ENCODE measurements at regions of chr11 and their contacts with region 1.

Region 1: GRCh38 chr11:33266393-33267215 is 9.4 kb downstream of the HIPK3 start:
- DNase-seq: peak; percentile 31 to 66
- H3K4me3 ChIP-seq: no peak overlapping the region
- H3K27ac ChIP-seq: peak overlapping the region; percentile 25; the same call in 1 of the 2 replicates
- H3K4me1 ChIP-seq: peaks cover 56% of the 10 kb centered on the region
- H3K27me3 ChIP-seq: no peaks in the 10 kb centered on the region
- CTCF ChIP-seq: no peak

Region 2: GRCh38 chr11:33187998-33188722 is 78.4 kb before region 1 on chr11:
- CTCF ChIA-PET with region 1: interaction called, 11 read pairs
- POLR2A ChIA-PET with region 1: no interaction called
- intact Hi-C with region 1: no loop called
- DNase-seq: peak in 1 of 2 experiments; percentile 28
- H3K4me3 ChIP-seq: no peak overlapping the region
- H3K27ac ChIP-seq: no peak overlapping the region
- H3K4me1 ChIP-seq: no peaks in the 10 kb centered on the region
- H3K27me3 ChIP-seq: no peaks in the 10 kb centered on the region
- CTCF ChIP-seq: no peak

Region 3: DNA sequence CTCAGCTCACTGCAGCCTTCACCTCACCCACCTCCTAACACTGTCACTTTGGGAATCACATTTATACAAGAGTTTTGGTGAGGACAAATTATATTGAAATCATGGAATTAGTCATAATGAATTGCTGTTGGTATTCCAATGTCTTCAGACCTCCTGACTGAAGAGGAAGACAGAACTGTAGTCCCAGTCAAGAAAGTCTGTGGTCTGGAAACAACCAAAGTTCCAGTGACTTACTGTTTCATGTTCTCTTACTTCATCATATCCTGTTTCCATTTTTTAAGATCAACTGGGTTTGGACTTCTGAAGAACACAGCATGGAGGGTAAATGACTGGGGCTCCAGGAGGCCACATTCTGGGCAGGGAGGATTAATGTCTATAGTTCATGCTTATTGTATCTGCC is 52.4 kb before region 1 on chr11:
- CTCF ChIA-PET with region 1: interaction called, 5 read pairs
- POLR2A ChIA-PET with region 1: interaction called, 16 read pairs
- intact Hi-C with region 1: no loop called
- DNase-seq: no peak
- H3K4me3 ChIP-seq: no peak overlapping the region
- H3K27ac ChIP-seq: no peak overlapping the region
- H3K4me1 ChIP-seq: no peaks in the 10 kb centered on the region
- H3K27me3 ChIP-seq: no peaks in the 10 kb centered on the region
- CTCF ChIP-seq: no peak